CD4-positive, alpha-beta T cell (primary cell): ENCODE measurements at regions of chr9 and their contacts with region 1.

Region 1: GRCh38 chr9:26205261-26205660 is 527.0 kb upstream of the TUSC1 start:
- DNase-seq: no peak
- ATAC-seq: no peak
- H3K4me3 ChIP-seq: no peak overlapping the region
- H3K4me3 Mint-ChIP-seq: no peak overlapping the region
- H3K27ac ChIP-seq: no peak overlapping the region
- H3K27ac Mint-ChIP-seq: no peak overlapping the region
- H3K4me1 ChIP-seq: no peaks in the 10 kb centered on the region
- H3K4me1 Mint-ChIP-seq: no peaks in the 10 kb centered on the region
- H3K27me3 ChIP-seq: no peaks in the 10 kb centered on the region
- H3K27me3 Mint-ChIP-seq: no peaks in the 10 kb centered on the region
- CTCF ChIP-seq: no peak

Region 2: DNA sequence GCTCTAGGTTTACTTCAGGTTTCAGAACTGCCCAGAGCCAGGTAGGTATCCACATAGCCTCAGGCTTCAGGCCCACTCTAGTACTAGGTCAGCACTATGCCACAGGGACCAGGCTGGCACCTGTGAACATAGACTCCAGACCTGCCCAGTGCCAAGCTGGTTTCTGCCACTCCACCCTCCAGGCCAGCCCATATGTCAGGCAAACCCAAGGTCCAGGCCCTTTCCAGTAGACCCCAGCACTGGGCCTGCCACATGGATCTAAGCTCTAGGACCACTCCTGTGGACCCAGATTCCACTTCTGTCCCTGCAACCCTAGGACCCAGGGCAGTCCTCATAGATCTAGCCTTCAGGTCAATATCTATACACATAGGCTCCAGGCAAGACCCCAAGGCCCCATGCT is 16.8 kb before region 1 on chr9:
- CTCF ChIA-PET with region 1: no interaction called
- POLR2A ChIA-PET with region 1: no interaction called
- intact Hi-C with region 1: loop called in 1 of 2 experiments (anchors 1 kb)
- DNase-seq: no peak
- ATAC-seq: no peak
- H3K4me3 ChIP-seq: no peak overlapping the region
- H3K4me3 Mint-ChIP-seq: no peak overlapping the region
- H3K27ac ChIP-seq: no peak overlapping the region
- H3K27ac Mint-ChIP-seq: no peak overlapping the region
- H3K4me1 ChIP-seq: no peaks in the 10 kb centered on the region
- H3K4me1 Mint-ChIP-seq: no peaks in the 10 kb centered on the region
- H3K27me3 ChIP-seq: no peaks in the 10 kb centered on the region
- H3K27me3 Mint-ChIP-seq: no peaks in the 10 kb centered on the region
- CTCF ChIP-seq: no peak